Thyroid gland (tissue), 4 donors: ENCODE measurements at regions of chr20 and their contacts with region 1.

Region 1: GRCh38 chr20:51306503-51307358 is 235.8 kb downstream of the NFATC2 start:
- DNase-seq: peak; percentile 67 to 76
- H3K4me3 ChIP-seq: no peak overlapping the region
- H3K27ac ChIP-seq: no peak overlapping the region
- H3K4me1 ChIP-seq: peaks cover 0 to 5% of the 10 kb centered on the region in 2 donors
- H3K27me3 ChIP-seq: no peaks in the 10 kb centered on the region
- CTCF ChIP-seq: peak; percentile 62 to 93 (median 80)
- POLR2A ChIP-seq: no peak

Region 2: DNA sequence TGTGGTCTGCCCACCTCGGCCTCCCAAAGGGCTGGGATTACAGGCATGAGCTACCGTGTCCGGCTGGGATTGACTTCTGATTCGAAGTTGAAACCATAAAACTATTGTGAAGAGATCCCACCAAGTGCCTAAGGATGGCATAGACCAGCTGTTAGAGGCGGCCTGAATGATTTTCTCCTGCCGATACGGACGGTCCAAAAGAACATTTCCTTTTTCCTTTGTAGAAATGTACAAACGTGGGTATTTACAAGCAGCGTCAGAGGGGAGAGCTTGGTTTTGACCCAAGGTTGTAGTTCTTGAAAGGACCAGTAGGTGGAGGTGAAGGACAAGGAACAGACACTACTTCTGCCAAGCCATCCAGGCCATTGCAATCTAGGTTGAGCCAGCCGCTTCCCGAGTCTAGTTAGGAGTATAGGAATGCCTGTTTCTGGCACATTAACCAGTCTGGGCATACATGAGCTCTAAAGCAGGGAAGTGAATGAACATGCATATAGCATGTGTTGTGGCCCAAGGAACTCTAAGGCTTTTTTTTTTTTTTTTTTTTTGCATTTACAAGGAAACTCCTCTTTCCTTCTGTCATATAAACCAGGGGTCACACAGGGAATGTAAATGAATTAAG is 319.0 kb before region 1 on chr20:
- intact Hi-C with region 1: loop called (anchors 2 kb)
- DNase-seq: peak; percentile 61 to 65
- H3K4me3 ChIP-seq: no peak overlapping the region
- H3K27ac ChIP-seq: no peak overlapping the region
- H3K4me1 ChIP-seq: peaks cover 0 to 5% of the 10 kb centered on the region in 2 donors
- H3K27me3 ChIP-seq: no peaks in the 10 kb centered on the region
- CTCF ChIP-seq: peak; percentile 72 to 92 (median 84)
- POLR2A ChIP-seq: no peak

Region 3: DNA sequence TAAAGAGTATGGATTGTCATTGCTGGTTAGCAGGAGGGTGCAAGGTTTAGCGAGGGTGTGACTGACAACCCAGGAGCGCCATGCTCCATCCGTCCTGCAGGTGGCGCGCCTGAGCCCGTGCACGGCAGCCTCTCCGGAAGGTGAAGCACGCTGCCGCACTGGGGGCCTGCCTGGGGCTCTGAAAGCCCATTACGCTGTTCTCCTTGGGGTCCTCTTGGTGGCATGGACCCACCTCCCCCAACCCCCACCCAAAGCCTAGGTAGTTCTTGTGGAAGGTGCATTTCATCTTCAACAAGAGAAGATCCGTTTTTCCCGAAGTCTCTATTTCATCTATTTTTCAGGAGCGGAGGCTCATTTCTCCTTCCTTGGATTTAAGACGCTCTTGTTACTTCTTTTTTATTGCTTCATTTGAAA is 86.4 kb before region 1 on chr20:
- intact Hi-C with region 1: loop called (anchors 5 kb)
- DNase-seq: peak; percentile 6 to 18
- H3K4me3 ChIP-seq: no peak overlapping the region
- H3K27ac ChIP-seq: no peak overlapping the region
- H3K4me1 ChIP-seq: no peaks in the 10 kb centered on the region
- H3K27me3 ChIP-seq: no peaks in the 10 kb centered on the region
- CTCF ChIP-seq: peak; percentile 46 to 85 (median 58)
- POLR2A ChIP-seq: no peak